ENCODE measurements at regions of chr10 and their contacts with region 1.

Region 1: DNA sequence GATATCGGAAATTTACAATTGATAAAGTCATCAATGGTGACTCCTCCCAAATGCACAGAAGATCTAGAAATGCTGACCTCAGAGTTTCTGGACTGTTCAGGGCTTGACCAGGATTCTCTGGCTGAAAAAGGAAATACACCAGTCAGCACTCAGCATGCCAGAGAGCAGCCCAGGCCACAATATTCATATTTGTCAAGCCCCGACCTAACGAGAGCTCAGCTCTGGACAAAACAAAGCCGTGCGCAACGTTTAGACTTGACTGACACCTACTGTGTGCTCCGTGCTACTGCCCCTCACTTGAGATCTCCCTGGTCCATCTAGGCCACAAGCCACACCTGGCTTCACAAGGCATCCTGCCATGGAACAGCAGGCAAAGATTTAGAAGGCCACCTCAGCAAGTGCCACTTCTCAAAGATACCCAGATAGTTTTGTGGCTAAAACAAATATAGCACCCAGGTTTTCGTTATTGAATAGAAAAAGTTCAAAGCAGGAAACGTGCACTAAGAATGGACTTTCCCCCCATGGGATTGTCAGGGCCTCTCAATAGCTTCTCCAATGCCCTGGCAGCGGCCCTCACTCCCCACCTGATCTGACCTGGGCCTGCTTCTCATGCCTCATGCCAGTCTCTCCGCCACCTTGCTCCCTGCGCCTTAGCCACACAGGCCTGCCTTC is 218.3 kb downstream of the FAM107B start:
- DNase-seq: peak; percentile 64
- ATAC-seq: peak; percentile 62
- H3K4me3 Mint-ChIP-seq: no peak overlapping the region
- H3K27ac Mint-ChIP-seq: peak overlapping the region; percentile 74
- H3K4me1 Mint-ChIP-seq: peaks cover 95% of the 10 kb centered on the region
- H3K27me3 Mint-ChIP-seq: no peaks in the 10 kb centered on the region

Region 2: DNA sequence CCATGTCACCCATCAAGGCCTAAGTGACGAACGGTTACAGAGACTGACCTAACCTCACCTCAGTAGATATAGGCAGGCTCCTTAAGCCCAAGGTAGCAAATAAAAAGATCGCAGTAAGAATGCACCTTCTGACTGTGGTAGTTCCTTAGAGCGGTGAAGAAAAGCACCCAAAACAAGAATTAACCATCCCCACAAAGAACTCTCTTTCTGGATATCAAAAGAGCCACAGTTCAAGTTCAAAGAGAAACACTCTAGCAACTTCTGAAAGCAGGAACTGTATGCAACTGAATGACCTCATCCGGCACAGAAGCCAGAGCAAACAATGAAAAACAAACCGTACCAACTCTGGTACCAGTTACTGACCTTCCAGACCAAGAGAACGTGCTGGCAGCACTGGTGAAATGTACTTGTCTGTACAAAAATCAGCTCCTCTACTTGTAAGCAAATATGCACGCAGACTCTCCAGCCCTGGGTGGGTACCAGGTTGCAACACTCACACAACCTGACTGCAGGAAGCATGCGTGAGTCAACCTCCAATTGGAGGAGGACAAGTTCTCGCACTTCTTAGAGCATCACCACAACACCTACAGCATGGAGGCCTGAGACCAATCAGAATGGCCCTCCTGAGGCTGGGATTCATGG is 15.6 kb after region 1 on chr10:
- CTCF ChIA-PET with region 1: interaction called, 10 read pairs
- DNase-seq: peak; percentile 80
- ATAC-seq: peak; percentile 78
- H3K4me3 Mint-ChIP-seq: peak overlapping the region; percentile 73
- H3K27ac Mint-ChIP-seq: peak overlapping the region; percentile 94
- H3K4me1 Mint-ChIP-seq: peaks cover 79% of the 10 kb centered on the region
- H3K27me3 Mint-ChIP-seq: no peaks in the 10 kb centered on the region

Region 3: DNA sequence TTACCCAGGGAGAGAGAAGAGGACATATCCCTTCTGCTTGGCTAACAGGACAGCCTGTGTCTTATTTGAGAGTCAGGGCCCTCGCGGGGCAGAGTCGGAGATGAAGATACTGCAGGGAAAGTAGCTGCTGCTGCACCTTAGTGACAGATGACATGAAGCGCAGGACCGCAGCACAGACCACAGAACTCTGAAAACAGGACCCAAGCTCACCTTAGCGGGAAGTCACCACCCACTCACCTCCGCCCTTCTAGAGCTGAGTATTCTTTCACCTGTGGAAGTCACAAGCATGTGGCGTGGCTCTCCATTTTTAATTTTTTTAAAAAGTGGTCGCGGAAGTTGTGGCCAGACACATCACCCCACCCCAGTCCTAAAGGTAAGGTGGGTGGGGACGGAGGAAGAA is 26.8 kb after region 1 on chr10:
- CTCF ChIA-PET with region 1: interaction called, 11 read pairs
- DNase-seq: peak; percentile 88
- ATAC-seq: peak; percentile 54
- H3K4me3 Mint-ChIP-seq: peak overlapping the region; percentile 51
- H3K27ac Mint-ChIP-seq: peak overlapping the region; percentile 81
- H3K4me1 Mint-ChIP-seq: peaks cover 78% of the 10 kb centered on the region
- H3K27me3 Mint-ChIP-seq: no peaks in the 10 kb centered on the region